Psoas muscle (tissue), 8 donors: ENCODE measurements at regions of chr6 and their contacts with region 1.

Region 1: DNA sequence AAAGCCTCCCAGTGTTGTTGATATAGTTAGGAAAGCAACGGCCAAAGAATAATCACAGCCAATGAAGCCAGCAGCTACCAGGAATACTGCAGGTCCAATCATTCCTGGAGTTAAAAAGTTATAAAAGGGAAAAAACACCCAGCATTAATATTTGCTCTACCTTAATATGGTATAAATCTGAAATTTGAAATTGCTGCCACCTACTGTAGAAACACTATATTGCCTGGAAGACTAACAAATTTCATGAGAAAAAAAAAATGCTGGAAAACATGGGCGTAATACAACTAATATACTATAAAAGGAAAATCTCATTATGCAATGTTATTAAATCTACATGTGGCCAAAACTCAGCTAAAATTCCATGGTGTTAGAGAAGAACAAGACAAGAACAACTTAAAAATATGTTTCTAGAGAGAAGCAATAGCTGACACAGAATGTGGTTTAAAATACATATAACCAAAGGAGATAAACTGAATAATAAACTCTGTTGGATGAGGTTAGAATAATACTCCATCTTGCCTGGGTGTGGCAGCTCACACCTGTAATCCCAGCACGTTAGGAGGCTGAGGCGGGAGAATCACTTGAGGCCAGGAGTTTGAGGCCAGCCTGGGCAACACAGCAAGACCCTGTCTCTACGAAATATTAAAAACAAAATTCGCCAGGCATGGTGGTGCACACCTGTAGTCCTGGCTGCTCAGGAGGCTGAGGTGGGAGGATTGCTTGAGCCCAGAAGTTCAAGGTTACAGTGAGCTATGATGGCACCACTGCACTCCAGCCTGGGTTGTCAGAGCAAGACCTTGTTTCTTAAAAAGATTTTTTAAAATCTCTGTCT is 43.1 kb downstream of the SLC17A5 start:
- DNase-seq: no peak
- ATAC-seq: peak; percentile 37 to 54 (median 40)
- H3K4me3 ChIP-seq: no peak overlapping the region
- H3K27ac ChIP-seq: no peak overlapping the region
- H3K4me1 ChIP-seq: no peaks in the 10 kb centered on the region
- H3K27me3 ChIP-seq: no peaks in the 10 kb centered on the region
- CTCF ChIP-seq: peak; percentile 75

Region 2: GRCh38 chr6:73481969-73482368 is 128.7 kb before region 1 on chr6:
- intact Hi-C with region 1: no loop called
- DNase-seq: no peak
- ATAC-seq: no peak
- H3K4me3 ChIP-seq: no peak overlapping the region
- H3K27ac ChIP-seq: no peak overlapping the region
- H3K4me1 ChIP-seq: no peaks in the 10 kb centered on the region
- H3K27me3 ChIP-seq: no peaks in the 10 kb centered on the region
- CTCF ChIP-seq: no peak

Region 3: GRCh38 chr6:73515204-73515655 is 95.4 kb before region 1 on chr6:
- intact Hi-C with region 1: loop called (anchors 1 to 2 kb)
- DNase-seq: no peak
- ATAC-seq: peak in 1 of 4 donors; percentile 3
- H3K4me3 ChIP-seq: no peak overlapping the region
- H3K27ac ChIP-seq: no peak overlapping the region
- H3K4me1 ChIP-seq: peaks cover 3% of the 10 kb centered on the region
- H3K27me3 ChIP-seq: peaks cover 0 to 9% (median 3%) of the 10 kb centered on the region in 3 donors
- CTCF ChIP-seq: no peak

Region 4: GRCh38 chr6:73942592-73943186 is 332.0 kb after region 1 on chr6:
- intact Hi-C with region 1: no loop called
- DNase-seq: no peak
- ATAC-seq: no peak
- H3K4me3 ChIP-seq: no peak overlapping the region
- H3K27ac ChIP-seq: no peak overlapping the region
- H3K4me1 ChIP-seq: no peaks in the 10 kb centered on the region
- H3K27me3 ChIP-seq: no peaks in the 10 kb centered on the region
- CTCF ChIP-seq: no peak